H1 (cell line): ENCODE measurements at regions of chr10 and their contacts with region 1.

Region 1: GRCh38 chr10:114388275-114388674 is 16.0 kb downstream of the AFAP1L2 start:
- DNase-seq: no peak
- H3K4me3 ChIP-seq: no peak overlapping the region
- H3K27ac ChIP-seq: no peak overlapping the region
- H3K4me1 ChIP-seq: peaks cover 0 to 13% (median 2%) of the 10 kb centered on the region in 4 experiments; a peak in 3 of 7 replicates
- H3K27me3 ChIP-seq: no peaks in the 10 kb centered on the region
- CTCF ChIP-seq: no peak
- EP300 ChIP-seq: no peak
- POLR2A ChIP-seq: no peak
- RAD21 ChIP-seq: no peak

Region 2: DNA sequence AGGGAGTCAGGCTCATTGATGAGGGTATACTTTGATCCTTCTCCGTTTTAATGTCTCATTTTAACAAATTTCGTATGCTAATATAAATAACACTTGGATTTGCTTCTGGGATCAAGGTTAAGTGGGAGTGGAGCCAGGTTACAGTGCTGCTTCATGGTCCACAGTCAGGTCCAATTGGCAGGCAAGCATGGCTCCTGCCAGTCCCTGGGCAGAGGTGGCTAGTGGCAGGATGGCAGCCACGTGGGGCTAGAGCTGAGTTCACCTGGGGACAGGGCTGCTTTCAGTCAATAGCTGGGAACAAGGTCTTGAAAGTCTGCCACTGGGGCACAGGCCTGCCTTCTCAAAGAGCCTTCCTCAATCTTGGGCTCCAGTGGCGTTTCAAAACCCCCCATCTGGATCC is 165.2 kb before region 1 on chr10:
- CTCF ChIA-PET with region 1: no interaction called
- POLR2A ChIA-PET with region 1: no interaction called
- DNase-seq: no peak
- H3K4me3 ChIP-seq: no peak overlapping the region
- H3K27ac ChIP-seq: no peak overlapping the region
- H3K4me1 ChIP-seq: no peaks in the 10 kb centered on the region
- H3K27me3 ChIP-seq: no peaks in the 10 kb centered on the region
- CTCF ChIP-seq: no peak
- EP300 ChIP-seq: no peak
- POLR2A ChIP-seq: no peak
- RAD21 ChIP-seq: no peak

Region 3: DNA sequence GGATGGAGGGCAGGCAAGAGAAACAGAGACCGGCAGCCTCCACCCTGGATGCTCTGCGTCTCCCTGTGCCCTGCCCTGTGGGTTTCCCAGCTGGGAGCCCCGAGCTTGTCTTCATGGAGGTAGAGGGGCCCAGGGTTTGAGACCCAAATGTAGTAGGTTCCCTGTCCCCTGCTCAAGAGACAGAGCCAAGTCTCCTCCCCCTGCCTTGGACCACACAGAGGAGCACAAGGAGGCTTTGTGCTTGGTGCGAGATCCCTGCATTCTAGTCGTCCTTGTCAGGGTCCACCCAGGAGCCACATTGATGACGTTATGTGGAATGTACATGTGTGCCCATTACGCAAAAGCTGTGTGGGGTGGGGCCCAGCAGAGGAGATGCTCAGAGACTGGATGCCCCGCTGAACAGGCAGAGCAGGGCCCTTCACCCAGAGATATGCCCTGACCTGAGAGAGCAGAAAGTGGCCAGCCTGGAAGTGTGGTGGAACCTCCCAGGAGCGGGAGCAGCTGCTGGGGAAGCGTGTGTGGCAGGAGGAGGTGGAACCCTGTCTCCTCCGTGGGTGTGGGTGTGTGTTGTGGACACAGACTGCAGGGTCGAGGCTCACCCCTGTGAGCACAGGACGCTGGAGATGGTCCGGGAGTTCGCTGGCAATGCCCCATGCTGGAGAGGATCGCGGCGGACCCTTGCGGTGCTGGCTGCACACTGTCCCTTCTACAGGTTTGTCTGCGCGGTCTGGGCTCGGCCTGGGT is 110.0 kb before region 1 on chr10:
- CTCF ChIA-PET with region 1: interaction called, 15 read pairs
- POLR2A ChIA-PET with region 1: no interaction called
- DNase-seq: no peak
- H3K4me3 ChIP-seq: no peak overlapping the region
- H3K27ac ChIP-seq: no peak overlapping the region
- H3K4me1 ChIP-seq: no peaks in the 10 kb centered on the region; a peak in 1 of 7 replicates
- H3K27me3 ChIP-seq: no peaks in the 10 kb centered on the region; a peak in 1 of 7 replicates
- CTCF ChIP-seq: no peak
- EP300 ChIP-seq: no peak
- POLR2A ChIP-seq: no peak
- RAD21 ChIP-seq: no peak

Region 4: GRCh38 chr10:114311496-114312199 is 76.6 kb before region 1 on chr10:
- CTCF ChIA-PET with region 1: interaction called, 33 read pairs
- POLR2A ChIA-PET with region 1: no interaction called
- DNase-seq: no peak
- H3K4me3 ChIP-seq: no peak overlapping the region
- H3K27ac ChIP-seq: no peak overlapping the region
- H3K4me1 ChIP-seq: no peaks in the 10 kb centered on the region; a peak in 2 of 7 replicates
- H3K27me3 ChIP-seq: no peaks in the 10 kb centered on the region
- CTCF ChIP-seq: no peak
- EP300 ChIP-seq: no peak
- POLR2A ChIP-seq: no peak
- RAD21 ChIP-seq: no peak

Region 5: DNA sequence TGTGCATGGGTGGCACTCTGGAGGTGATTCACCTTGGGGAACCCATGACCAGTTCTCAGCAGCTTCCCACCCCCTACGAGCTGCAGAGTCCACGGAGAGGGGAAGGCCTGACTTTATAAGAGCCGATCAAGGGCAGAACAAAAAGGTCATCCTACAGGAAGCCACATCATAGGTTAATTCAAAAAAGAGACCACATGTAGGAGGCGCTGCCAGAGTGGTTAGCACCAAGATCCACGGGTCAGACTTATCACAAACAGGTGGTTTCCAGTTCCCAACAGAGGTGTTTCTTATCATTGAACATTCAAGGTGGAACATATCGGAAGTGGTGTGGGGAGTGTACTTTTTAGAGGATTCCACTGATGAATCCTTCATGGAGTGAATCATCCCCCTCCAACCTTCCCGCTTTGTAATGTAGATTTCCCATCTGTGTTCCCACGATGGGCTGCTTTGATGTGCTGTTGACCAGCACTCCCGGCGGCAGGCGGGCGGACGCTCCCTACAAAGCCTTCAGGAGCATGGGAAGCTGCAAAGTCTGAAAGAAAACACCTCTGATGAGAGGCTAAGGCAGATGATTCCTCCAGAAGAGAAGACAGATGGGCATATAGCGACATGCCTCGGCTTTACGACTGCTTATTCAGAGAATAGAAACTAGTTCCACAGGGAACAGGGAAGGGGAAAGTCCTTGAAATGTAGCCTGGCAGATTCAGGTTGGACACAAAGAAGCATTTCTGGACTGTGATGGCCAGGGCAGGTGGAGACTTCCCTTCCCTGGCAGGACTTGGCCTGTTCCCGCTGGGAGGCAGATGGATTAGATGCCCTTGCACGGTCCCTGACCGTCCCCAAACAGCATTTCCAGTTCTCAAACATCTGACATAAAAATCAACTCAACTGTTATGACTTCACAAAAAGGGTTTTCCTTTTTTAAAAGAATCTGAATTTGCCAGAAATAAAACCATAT is 50.5 kb before region 1 on chr10:
- CTCF ChIA-PET with region 1: interaction called, 48 read pairs
- POLR2A ChIA-PET with region 1: no interaction called
- DNase-seq: peak in 1 of 2 experiments; percentile 53
- H3K4me3 ChIP-seq: no peak overlapping the region
- H3K27ac ChIP-seq: no peak overlapping the region
- H3K4me1 ChIP-seq: peaks cover 6 to 11% (median 10%) of the 10 kb centered on the region in 4 experiments
- H3K27me3 ChIP-seq: no peaks in the 10 kb centered on the region
- CTCF ChIP-seq: no peak
- EP300 ChIP-seq: no peak; a peak in 1 of 3 replicates
- POLR2A ChIP-seq: no peak
- RAD21 ChIP-seq: no peak

Region 6: DNA sequence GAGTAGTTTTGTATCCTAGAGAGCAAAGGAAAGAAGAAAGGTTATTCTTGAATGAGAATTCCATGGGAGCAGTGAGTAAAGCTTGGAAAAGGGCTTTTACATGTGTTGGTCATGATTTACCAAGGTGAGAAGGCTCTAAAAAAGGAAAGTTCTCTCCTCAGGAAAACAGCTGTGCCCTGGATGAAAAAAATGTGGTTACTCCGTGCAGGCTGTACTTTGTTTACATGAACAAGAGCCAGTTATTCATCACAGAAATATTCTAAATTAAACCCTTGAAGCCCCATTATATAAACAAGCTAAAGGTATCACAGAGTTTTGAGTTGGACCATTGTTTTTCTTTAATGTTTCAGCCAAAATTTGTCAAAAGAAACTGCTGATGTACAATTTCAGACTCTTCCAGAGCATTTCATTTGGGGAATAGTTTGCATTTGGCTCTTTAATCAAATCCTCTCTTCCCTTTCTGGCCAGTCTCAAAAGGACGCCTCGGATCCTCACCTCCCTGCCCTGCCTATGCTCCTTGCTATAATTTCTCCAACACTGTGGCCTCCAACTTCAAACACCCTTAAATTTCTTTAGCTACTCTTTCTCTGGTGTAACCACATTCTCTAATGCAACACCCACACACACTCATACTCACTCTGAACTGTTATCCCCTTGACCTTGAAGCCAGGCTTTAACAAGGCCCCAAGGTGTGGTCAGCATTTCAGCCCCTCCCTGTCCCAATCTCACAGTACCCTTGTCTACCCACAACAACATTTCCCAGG is 31.3 kb before region 1 on chr10:
- CTCF ChIA-PET with region 1: interaction called, 13 read pairs
- POLR2A ChIA-PET with region 1: no interaction called
- DNase-seq: no peak
- H3K4me3 ChIP-seq: no peak overlapping the region
- H3K27ac ChIP-seq: no peak overlapping the region
- H3K4me1 ChIP-seq: peaks cover 3 to 9% (median 5%) of the 10 kb centered on the region in 4 experiments; a peak in 4 of 7 replicates
- H3K27me3 ChIP-seq: no peaks in the 10 kb centered on the region
- CTCF ChIP-seq: no peak
- EP300 ChIP-seq: no peak
- POLR2A ChIP-seq: no peak
- RAD21 ChIP-seq: no peak

Region 7: GRCh38 chr10:114403541-114404161 is 15.4 kb after region 1 on chr10:
- CTCF ChIA-PET with region 1: interaction called, 98 read pairs
- POLR2A ChIA-PET with region 1: no interaction called
- DNase-seq: peak in 1 of 2 experiments; percentile 80
- H3K4me3 ChIP-seq: peak overlapping the region; percentile 59 to 75 (median 64)
- H3K27ac ChIP-seq: no peak overlapping the region
- H3K4me1 ChIP-seq: peaks cover 0 to 10% (median 2%) of the 10 kb centered on the region in 4 experiments; a peak in 4 of 7 replicates
- H3K27me3 ChIP-seq: peaks cover 9 to 30% (median 25%) of the 10 kb centered on the region in 4 experiments
- CTCF ChIP-seq: peak; percentile 34 to 47 (median 37)
- EP300 ChIP-seq: no peak
- POLR2A ChIP-seq: no peak
- RAD21 ChIP-seq: peak; percentile 27 to 44; a peak in 2 of 4 replicates

Region 8: DNA sequence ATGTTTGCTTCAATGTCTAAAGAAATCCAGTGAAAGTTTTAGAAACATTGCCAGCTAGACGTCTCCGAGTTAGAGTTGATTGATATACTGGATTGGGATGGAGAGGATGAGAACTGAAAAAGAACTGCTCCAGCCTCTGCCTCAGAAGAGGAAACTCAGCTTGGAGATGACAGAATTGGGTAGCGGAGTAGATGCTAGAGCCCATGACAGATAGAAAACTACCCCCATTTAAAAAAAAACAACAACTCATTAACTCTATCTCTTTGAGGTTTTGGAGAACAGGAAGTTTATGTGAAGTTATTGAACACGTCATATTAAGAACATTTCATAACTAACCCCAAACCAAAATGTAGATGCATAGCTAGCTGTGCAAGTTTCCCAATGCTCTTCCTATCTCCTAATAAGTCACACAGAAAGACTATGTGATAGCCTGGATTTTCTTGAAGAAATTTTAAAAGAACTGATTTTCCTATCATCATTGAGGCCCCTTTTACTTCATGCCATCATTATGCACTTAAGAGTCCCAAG is 44.4 kb after region 1 on chr10:
- CTCF ChIA-PET with region 1: interaction called, 16 read pairs
- POLR2A ChIA-PET with region 1: no interaction called
- DNase-seq: no peak
- H3K4me3 ChIP-seq: no peak overlapping the region
- H3K27ac ChIP-seq: no peak overlapping the region
- H3K4me1 ChIP-seq: peaks cover 0 to 2% (median 0%) of the 10 kb centered on the region in 4 experiments; a peak in 1 of 7 replicates
- H3K27me3 ChIP-seq: no peaks in the 10 kb centered on the region
- CTCF ChIP-seq: no peak
- EP300 ChIP-seq: no peak
- POLR2A ChIP-seq: no peak
- RAD21 ChIP-seq: no peak

Region 9: GRCh38 chr10:114681542-114681941 is 293.3 kb after region 1 on chr10:
- CTCF ChIA-PET with region 1: no interaction called
- POLR2A ChIA-PET with region 1: no interaction called
- DNase-seq: no peak
- H3K4me3 ChIP-seq: no peak overlapping the region
- H3K27ac ChIP-seq: no peak overlapping the region
- H3K4me1 ChIP-seq: no peaks in the 10 kb centered on the region; a peak in 1 of 7 replicates
- H3K27me3 ChIP-seq: no peaks in the 10 kb centered on the region
- CTCF ChIP-seq: no peak
- EP300 ChIP-seq: no peak
- POLR2A ChIP-seq: no peak
- RAD21 ChIP-seq: no peak